Endothelial cell of umbilical vein (primary cell): ENCODE measurements at regions of chr7 and their contacts with region 1.

Region 1: GRCh38 chr7:5854738-5855137 is 25.9 kb upstream of the OCM start:
- DNase-seq: no peak
- H3K4me3 ChIP-seq: no peak overlapping the region
- H3K27ac ChIP-seq: no peak overlapping the region
- H3K4me1 ChIP-seq: no peaks in the 10 kb centered on the region
- H3K27me3 ChIP-seq: no peaks in the 10 kb centered on the region
- CTCF ChIP-seq: no peak
- POLR2A ChIP-seq: no peak

Region 2: GRCh38 chr7:5867060-5867459 is 12.3 kb after region 1 on chr7:
- CTCF ChIA-PET with region 1: interaction called, 10 read pairs
- POLR2A ChIA-PET with region 1: no interaction called
- dilution Hi-C with region 1: no loop called
- intact Hi-C with region 1: no loop called
- DNase-seq: no peak
- H3K4me3 ChIP-seq: no peak overlapping the region
- H3K27ac ChIP-seq: no peak overlapping the region
- H3K4me1 ChIP-seq: no peaks in the 10 kb centered on the region
- H3K27me3 ChIP-seq: peaks cover 0 to 3% of the 10 kb centered on the region in 2 experiments
- CTCF ChIP-seq: no peak
- POLR2A ChIP-seq: no peak

Region 3: GRCh38 chr7:6026011-6026819 is 171.5 kb after region 1 on chr7:
- CTCF ChIA-PET with region 1: interaction called, 3 read pairs
- POLR2A ChIA-PET with region 1: no interaction called
- dilution Hi-C with region 1: no loop called
- intact Hi-C with region 1: loop called (anchors 10 kb)
- DNase-seq: peak; percentile 18
- H3K4me3 ChIP-seq: no peak overlapping the region
- H3K27ac ChIP-seq: no peak overlapping the region
- H3K4me1 ChIP-seq: peaks cover 3% of the 10 kb centered on the region
- H3K27me3 ChIP-seq: no peaks in the 10 kb centered on the region
- CTCF ChIP-seq: peak in 1 of 2 donors; percentile 17
- POLR2A ChIP-seq: no peak

Region 4: DNA sequence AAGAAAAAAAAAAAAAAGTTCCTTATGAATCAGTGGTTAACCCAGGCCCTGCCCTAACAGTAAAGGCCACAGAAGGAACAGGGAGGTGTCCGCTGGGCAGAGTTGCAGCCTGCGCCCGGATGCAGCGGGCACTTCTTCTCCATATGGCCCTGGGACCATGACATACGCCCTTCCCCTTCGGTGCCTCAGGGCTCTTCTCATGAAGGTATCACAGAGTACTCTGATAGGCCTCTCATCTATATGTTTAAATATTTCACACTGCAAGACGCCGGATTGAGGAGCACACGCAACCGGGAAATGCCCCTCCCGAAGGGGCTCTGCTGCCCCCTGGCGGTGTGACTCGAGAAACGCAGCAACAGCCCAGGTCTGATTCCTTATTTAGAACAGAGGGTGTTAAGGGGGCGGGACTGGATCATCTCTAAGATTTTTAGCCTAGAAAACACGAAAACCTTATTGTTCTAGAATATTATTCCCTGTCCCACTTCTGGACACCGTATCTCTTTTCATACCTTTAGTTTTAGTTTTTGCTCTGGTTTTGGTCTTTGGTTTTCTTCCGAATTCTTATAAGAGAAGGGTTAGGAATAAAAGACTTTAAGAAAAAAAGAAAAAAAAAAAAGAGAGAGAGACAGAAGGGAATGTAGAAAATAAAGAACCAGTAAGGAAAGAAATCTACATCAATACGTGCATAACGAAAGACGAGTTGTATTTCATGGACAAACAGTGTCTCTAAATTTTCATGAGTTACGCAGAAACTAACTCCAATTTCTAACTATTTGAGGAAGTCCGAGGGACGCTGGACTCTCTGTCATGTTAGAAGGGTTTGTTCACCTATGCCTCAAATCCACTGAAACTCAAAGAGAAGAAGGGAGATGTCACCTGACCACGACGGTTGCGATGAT is 581.0 kb after region 1 on chr7:
- CTCF ChIA-PET with region 1: no interaction called
- POLR2A ChIA-PET with region 1: no interaction called
- dilution Hi-C with region 1: no loop called
- intact Hi-C with region 1: loop called (anchors 5 kb)
- DNase-seq: peak; percentile 84
- H3K4me3 ChIP-seq: no peak overlapping the region
- H3K27ac ChIP-seq: no peak overlapping the region
- H3K4me1 ChIP-seq: peaks cover 11% of the 10 kb centered on the region
- H3K27me3 ChIP-seq: no peaks in the 10 kb centered on the region
- CTCF ChIP-seq: peak; percentile 93 to 95
- POLR2A ChIP-seq: no peak